BJ (cell line): ENCODE measurements at regions of chr5 and their contacts with region 1.

Region 1: DNA sequence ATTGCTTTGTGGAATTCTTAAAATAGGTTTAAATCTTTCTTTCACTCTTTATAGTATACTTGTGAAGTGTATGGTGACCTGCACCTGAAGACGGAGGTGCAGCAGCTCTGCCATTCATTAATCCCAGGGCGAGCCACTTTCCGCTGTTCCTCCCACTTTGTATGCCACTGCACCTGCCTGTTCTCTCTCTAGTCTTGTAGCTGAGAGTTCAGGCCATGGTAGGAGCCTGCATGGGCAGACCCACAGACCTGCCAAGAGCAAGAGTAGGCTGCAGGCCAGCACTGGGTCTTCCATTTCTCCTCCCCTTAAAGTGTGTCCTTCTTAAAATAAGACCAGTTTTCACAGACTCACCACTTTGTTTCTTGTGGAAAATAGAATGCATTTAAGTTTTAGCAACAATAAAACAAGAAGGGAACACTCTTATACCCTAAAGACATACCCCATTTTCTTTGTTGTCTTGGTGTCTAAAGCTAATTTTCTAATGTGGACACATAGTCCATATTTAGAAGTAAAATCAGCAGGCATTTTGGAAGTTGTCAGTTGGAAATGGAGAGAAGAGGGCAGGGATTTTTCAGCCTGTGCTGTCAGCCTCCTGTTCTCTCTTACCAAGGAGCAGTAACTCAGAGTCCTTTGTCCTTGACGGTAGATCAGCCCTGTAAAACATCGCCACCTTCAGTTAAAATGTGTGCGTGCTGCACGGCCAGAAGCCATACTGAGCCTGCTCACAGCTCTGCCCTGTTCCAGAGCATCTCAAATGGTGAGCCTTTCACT is 103.2 kb downstream of the SNCAIP start:
- DNase-seq: peak; percentile 13
- H3K4me3 ChIP-seq: no peak overlapping the region
- H3K27me3 ChIP-seq: no peaks in the 10 kb centered on the region
- CTCF ChIP-seq: peak; percentile 78

Region 2: GRCh38 chr5:122202952-122203351 is 212.3 kb before region 1 on chr5:
- CTCF ChIA-PET with region 1: interaction called, 12 read pairs
- POLR2A ChIA-PET with region 1: no interaction called
- DNase-seq: no peak
- H3K4me3 ChIP-seq: no peak overlapping the region
- H3K27me3 ChIP-seq: peaks cover 2% of the 10 kb centered on the region; the same call in 1 of the 2 replicates
- CTCF ChIP-seq: no peak

Region 3: DNA sequence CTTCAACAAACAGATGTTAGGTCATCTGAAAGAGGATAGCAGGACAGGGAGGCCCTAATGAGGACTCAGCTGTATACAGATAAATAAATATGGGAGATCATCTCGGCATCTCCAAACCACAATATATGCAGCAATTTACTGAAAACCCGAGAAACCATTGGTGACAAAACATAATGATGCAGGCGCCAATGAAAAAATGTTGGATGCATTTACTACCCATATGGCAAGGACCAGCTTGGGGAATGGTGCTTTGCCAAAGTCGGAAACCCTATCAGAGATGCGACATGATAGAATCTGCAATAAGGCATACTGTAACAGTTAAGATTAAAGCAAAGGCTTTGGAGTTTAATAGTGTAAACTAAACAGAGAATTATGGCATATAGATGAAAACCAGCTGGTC is 11.2 kb before region 1 on chr5:
- CTCF ChIA-PET with region 1: interaction called, 12 read pairs
- POLR2A ChIA-PET with region 1: no interaction called
- DNase-seq: no peak
- H3K4me3 ChIP-seq: no peak overlapping the region
- H3K27me3 ChIP-seq: no peaks in the 10 kb centered on the region
- CTCF ChIP-seq: no peak